Dorsolateral prefrontal cortex (tissue), 120 donors: ENCODE measurements at regions of chr6 and their contacts with region 1.

Region 1: GRCh38 chr6:167796192-167796996 is 30.3 kb upstream of the AFDN start:
- DNase-seq: peak in 6 of 10 donors; percentile 21 to 78 (median 50)
- H3K4me3 ChIP-seq: peak overlapping the region in 48 of 59 donors; percentile 3 to 53 (median 28)
- H3K27ac ChIP-seq: no peak overlapping the region
- H3K27me3 ChIP-seq: peaks cover 0 to 22% (median 0%) of the 10 kb centered on the region in 45 donors
- CTCF ChIP-seq: peak in 3 of 56 donors; percentile 4 to 22 (median 8)

Region 2: DNA sequence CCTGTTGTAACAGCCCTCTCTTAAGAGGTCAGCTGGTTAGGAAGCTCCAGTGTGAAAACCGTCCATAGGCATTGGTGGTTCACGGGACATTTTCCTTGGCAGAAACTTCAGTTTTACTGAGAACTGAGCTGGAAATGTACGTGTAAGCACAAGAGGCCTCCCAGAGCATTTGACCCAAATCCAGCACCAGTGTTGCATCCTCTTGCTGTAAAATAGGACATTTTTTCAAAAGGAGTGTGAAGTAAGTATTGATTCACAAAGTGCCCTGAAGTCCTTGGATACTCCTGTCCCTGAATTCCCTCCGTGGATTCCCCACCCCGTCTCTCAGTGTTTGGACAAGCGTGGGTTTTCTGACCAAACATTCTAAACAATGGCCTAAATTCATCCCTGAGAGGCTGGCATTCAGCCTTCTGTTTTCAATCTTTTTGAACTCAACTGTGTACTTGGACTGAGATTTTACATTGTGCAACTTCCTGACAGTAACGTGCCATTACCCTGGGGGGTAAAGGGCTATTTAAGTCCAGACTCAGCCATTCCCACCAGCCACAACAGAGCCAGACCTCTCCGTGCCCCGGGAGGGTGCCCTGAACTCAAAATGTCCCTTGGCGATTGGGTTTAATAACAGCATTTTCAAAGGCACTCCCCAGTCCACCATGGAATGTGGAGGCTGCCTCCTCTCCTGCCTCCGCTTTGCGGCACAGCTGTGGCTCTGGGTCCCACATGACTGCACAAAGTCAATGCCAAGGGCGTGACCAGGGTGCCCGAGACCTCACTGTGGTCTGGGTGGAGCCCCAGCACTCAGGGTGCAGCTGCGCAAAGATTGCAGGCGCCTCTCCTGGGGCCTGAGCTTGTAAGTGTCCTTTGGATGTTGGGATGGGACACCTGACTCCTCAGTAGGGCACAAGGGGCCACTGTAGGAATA is 62.4 kb before region 1 on chr6:
- intact Hi-C with region 1: loop called in 1 of 2 experiments (anchors 5 kb)
- DNase-seq: no peak
- H3K4me3 ChIP-seq: no peak overlapping the region
- H3K27ac ChIP-seq: peak overlapping the region in 1 of 59 donors; percentile 7
- H3K27me3 ChIP-seq: peaks cover 0 to 3% (median 0%) of the 10 kb centered on the region in 45 donors
- CTCF ChIP-seq: no peak